Endothelial cell of umbilical vein (primary cell): ENCODE measurements at regions of chr5 and their contacts with region 1.

Region 1: GRCh38 chr5:132854301-132854700 is 12.0 kb downstream of the GDF9 start:
- DNase-seq: peak; percentile 73
- H3K4me3 ChIP-seq: no peak overlapping the region
- H3K27ac ChIP-seq: no peak overlapping the region
- H3K4me1 ChIP-seq: no peaks in the 10 kb centered on the region
- H3K27me3 ChIP-seq: no peaks in the 10 kb centered on the region
- CTCF ChIP-seq: no peak
- POLR2A ChIP-seq: no peak

Region 2: DNA sequence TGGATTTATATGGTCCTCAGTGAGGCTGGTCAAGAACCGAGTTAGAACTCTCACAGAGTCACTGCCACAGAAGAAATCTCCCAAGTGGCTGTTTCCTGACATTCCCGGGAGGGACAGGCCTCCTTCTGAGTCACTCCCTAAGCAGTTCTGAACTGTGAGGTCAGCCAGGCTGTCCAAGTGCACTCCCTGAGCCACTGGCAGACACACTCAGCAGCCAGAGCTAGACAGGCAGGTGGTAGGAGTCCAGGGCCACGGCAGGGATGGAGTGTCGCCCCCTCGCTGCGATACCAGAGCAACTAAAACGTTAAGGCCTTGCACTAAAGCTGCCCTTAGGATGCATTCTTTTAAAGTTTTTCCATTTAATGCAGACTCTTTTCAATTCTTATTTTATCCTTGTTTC is 177.1 kb before region 1 on chr5:
- CTCF ChIA-PET with region 1: no interaction called
- POLR2A ChIA-PET with region 1: no interaction called
- dilution Hi-C with region 1: no loop called
- intact Hi-C with region 1: no loop called
- DNase-seq: peak; percentile 70
- H3K4me3 ChIP-seq: no peak overlapping the region
- H3K27ac ChIP-seq: no peak overlapping the region
- H3K4me1 ChIP-seq: peaks cover 13% of the 10 kb centered on the region
- H3K27me3 ChIP-seq: no peaks in the 10 kb centered on the region
- CTCF ChIP-seq: peak in 1 of 2 donors; percentile 19
- POLR2A ChIP-seq: no peak

Region 3: DNA sequence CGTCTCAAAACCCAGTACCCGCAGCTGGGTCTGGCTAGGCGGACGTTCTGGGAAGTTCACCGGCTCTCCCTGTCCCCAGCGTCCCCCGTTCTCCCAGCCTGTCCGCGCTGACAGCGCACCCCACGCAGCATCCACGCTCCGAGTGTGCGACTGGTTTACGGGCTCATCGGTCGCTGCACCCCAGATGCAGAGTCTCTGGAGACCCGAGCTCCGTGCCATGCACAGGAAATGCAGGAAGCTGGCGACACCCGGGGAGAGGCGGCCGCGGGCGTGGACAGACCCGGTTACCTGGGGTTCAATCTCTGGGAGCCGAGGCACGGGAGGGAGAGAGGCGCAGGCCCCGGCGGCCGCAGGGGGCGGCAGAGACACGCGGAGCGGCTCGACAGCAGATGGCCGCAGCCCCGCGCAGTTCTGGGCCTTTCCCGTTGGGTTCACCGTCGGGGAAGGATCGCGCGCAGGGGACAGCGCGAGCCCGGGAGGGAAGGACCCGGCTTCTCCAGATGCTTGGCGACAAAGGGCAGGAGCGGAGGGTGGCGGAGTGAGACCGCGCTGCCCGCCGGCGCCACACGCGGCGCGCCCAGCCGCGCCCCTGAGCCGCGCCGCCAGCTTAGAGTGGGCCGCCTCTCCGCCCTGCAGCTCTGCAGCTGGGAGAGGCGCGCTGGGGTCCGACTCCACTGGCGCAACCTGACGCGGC is 24.4 kb before region 1 on chr5:
- CTCF ChIA-PET with region 1: interaction called, 4 read pairs
- POLR2A ChIA-PET with region 1: no interaction called
- dilution Hi-C with region 1: no loop called
- intact Hi-C with region 1: loop called (anchors 1 kb)
- DNase-seq: peak; percentile 75
- H3K4me3 ChIP-seq: peak overlapping the region; percentile 41 to 59 (median 49)
- H3K27ac ChIP-seq: peak overlapping the region; percentile 32
- H3K4me1 ChIP-seq: peaks cover 12% of the 10 kb centered on the region
- H3K27me3 ChIP-seq: no peaks in the 10 kb centered on the region
- CTCF ChIP-seq: peak; percentile 92 to 99
- POLR2A ChIP-seq: peak; percentile 28